ENCODE measurements at regions of chr9 and their contacts with region 1.

Region 1: GRCh38 chr9:127715394-127716337 is at the starts of genes PTRH1 and TTC16:
- DNase-seq: peak; percentile 87 to 98
- H3K4me3 ChIP-seq: peak within 1 kb of the TSS; percentile 92
- H3K27ac ChIP-seq: no peak within 1 kb of the TSS; the same call in 1 of the 2 replicates
- H3K4me1 ChIP-seq: 0 out of 2 replicates have a peak, but pooled peaks cover 4% of the 10 kb centered on the region
- H3K27me3 ChIP-seq: no peaks in the 10 kb centered on the region
- CTCF ChIP-seq: no peak
- total RNA-seq, gene PTRH1: 22.4 and 32.9 TPM in 2 replicates
- total RNA-seq, gene TTC16: 0.26 and 0.40 TPM in 2 replicates

Region 2: GRCh38 chr9:127676636-127677035 is 39.0 kb before region 1 on chr9:
- CTCF ChIA-PET with region 1: no interaction called
- POLR2A ChIA-PET with region 1: interaction called, 18 read pairs
- intact Hi-C with region 1: no loop called
- DNase-seq: no peak
- H3K4me3 ChIP-seq: no peak overlapping the region
- H3K27ac ChIP-seq: no peak overlapping the region
- H3K4me1 ChIP-seq: no peaks in the 10 kb centered on the region
- H3K27me3 ChIP-seq: no peaks in the 10 kb centered on the region
- CTCF ChIP-seq: no peak

Region 3: GRCh38 chr9:127910613-127911205 is 195.0 kb after region 1 on chr9:
- CTCF ChIA-PET with region 1: no interaction called
- POLR2A ChIA-PET with region 1: interaction called, 10 read pairs
- intact Hi-C with region 1: no loop called
- DNase-seq: no peak
- H3K4me3 ChIP-seq: no peak overlapping the region
- H3K27ac ChIP-seq: no peak overlapping the region
- H3K4me1 ChIP-seq: peaks cover 12% of the 10 kb centered on the region
- H3K27me3 ChIP-seq: no peaks in the 10 kb centered on the region
- CTCF ChIP-seq: no peak; the same call in 1 of the 2 replicates

Measured in PC-9 (cell line).